ENCODE measurements at regions of chr4 and their contacts with region 1.

Region 1: DNA sequence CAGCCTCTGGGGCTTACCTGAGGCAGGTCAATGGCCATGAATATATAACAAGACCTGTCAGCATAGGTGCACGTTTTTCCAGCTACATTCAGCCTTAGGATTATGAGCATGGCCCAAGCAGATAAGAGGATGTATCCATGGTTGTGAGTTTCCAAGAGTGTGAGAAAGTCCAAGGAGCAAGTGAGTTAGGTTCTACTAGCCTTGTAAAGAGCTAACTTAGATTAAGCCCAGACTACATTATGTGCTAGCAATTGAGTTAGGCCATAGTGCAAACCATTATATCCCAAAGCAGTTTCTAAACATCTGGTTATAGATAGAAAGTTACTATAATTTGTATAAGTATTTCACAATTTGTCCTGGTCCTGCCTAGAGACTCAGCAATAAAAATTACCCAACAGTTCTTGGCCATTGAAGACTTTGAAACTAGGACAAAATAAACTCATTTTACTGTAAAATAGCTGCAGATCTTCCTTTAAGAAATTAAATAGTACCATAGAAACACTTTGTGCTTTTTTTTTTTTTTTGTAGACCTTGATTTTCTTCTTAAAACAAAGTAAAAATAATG is 312.0 kb downstream of the CAMK2D start:
- DNase-seq: no peak
- ATAC-seq: no peak
- H3K4me3 ChIP-seq: no peak overlapping the region
- H3K27ac ChIP-seq: no peak overlapping the region
- H3K4me1 ChIP-seq: no peaks in the 10 kb centered on the region; the same call in none of the 2 replicates
- H3K27me3 ChIP-seq: no peaks in the 10 kb centered on the region
- CTCF ChIP-seq: no peak
- EP300 ChIP-seq: no peak
- POLR2A ChIP-seq: no peak
- RAD21 ChIP-seq: no peak

Region 2: GRCh38 chr4:113222471-113222870 is 227.0 kb before region 1 on chr4:
- CTCF ChIA-PET with region 1: no interaction called
- POLR2A ChIA-PET with region 1: no interaction called
- RAD21 ChIA-PET with region 1: no interaction called
- SMC1A ChIA-PET with region 1: no interaction called
- in situ Hi-C with region 1: no loop called
- intact Hi-C with region 1: no loop called
- DNase-seq: no peak
- ATAC-seq: no peak
- H3K4me3 ChIP-seq: no peak overlapping the region
- H3K27ac ChIP-seq: no peak overlapping the region
- H3K4me1 ChIP-seq: no peaks in the 10 kb centered on the region
- H3K27me3 ChIP-seq: no peaks in the 10 kb centered on the region
- CTCF ChIP-seq: no peak
- EP300 ChIP-seq: no peak
- POLR2A ChIP-seq: no peak
- RAD21 ChIP-seq: no peak

Region 3: DNA sequence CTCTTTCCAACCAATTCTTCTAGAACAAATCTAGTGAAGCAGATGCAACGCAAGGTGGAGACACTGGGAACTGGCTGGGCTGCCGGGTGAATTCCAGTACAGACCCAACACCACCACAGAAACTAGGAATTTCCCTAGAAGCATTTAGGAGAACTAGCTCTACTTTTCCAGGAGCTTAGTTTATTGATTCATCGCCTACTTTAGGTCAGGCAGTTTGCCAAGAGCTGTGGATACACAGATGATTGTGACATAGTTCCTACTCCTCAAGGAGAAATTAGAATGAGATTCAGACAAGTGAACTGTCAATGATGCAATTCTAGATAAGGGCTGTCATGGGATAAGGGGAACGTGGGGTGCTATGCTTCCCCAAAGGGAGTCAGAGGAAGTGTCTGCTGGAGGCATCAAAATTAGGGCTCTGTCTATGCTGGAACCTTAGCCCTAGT is 38.0 kb before region 1 on chr4:
- CTCF ChIA-PET with region 1: no interaction called
- POLR2A ChIA-PET with region 1: no interaction called
- RAD21 ChIA-PET with region 1: no interaction called
- SMC1A ChIA-PET with region 1: no interaction called
- in situ Hi-C with region 1: no loop called
- intact Hi-C with region 1: no loop called
- DNase-seq: no peak
- ATAC-seq: no peak
- H3K4me3 ChIP-seq: no peak overlapping the region
- H3K27ac ChIP-seq: no peak overlapping the region
- H3K4me1 ChIP-seq: no peaks in the 10 kb centered on the region
- H3K27me3 ChIP-seq: no peaks in the 10 kb centered on the region
- CTCF ChIP-seq: no peak
- EP300 ChIP-seq: no peak
- POLR2A ChIP-seq: no peak
- RAD21 ChIP-seq: no peak

Region 4: DNA sequence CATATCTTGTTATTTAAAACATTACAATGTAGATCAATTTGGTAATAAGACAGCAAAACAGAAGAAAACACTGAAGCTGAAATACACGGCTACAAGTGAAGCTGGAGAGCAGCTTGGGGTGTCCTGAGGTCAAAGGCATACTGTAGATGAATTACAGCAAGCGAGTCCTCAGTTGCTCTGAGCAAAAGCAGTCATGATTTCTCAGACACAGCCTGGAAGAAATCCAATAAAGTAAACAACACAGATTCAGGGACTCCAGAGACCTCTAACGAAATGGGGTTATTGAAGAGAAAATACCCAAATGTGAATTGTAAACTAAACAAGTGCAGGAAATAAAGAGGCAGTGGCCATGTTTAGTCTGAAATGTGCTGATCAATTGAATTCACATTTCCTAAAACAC is 12.4 kb before region 1 on chr4:
- CTCF ChIA-PET with region 1: interaction called, 3 read pairs
- POLR2A ChIA-PET with region 1: no interaction called
- RAD21 ChIA-PET with region 1: no interaction called
- SMC1A ChIA-PET with region 1: interaction called, 10 read pairs
- in situ Hi-C with region 1: no loop called
- intact Hi-C with region 1: no loop called
- DNase-seq: no peak
- ATAC-seq: no peak
- H3K4me3 ChIP-seq: no peak overlapping the region
- H3K27ac ChIP-seq: no peak overlapping the region
- H3K4me1 ChIP-seq: no peaks in the 10 kb centered on the region
- H3K27me3 ChIP-seq: no peaks in the 10 kb centered on the region
- CTCF ChIP-seq: no peak
- EP300 ChIP-seq: no peak
- POLR2A ChIP-seq: no peak
- RAD21 ChIP-seq: no peak

Measured in GM12878 (cell line).